Heart right ventricle (tissue), 16 donors: ENCODE measurements at regions of chr1 and their contacts with region 1.

Region 1: GRCh38 chr1:183023601-183024316 is 539 bp downstream of the LAMC1 start:
- DNase-seq: peak; percentile 57 to 63
- ATAC-seq: peak; percentile 26 to 70 (median 44)
- H3K4me3 ChIP-seq: peak overlapping the region; percentile 55 to 98 (median 83)
- H3K27ac ChIP-seq: peak overlapping the region; percentile 99 to 100 (median 100)
- H3K4me1 ChIP-seq: peaks cover 3 to 70% (median 59%) of the 10 kb centered on the region in 9 donors
- H3K27me3 ChIP-seq: peaks cover 0 to 19% (median 0%) of the 10 kb centered on the region in 7 donors
- CTCF ChIP-seq: peak in 8 of 9 donors; percentile 13 to 63 (median 45)

Region 2: GRCh38 chr1:182789138-182790076 is 234.4 kb before region 1 on chr1 and contains the start of gene NPL:
- intact Hi-C with region 1: no loop called
- DNase-seq: peak; percentile 82 to 86
- ATAC-seq: peak; percentile 96 to 98 (median 97)
- H3K4me3 ChIP-seq: peak within 1 kb of the TSS; percentile 10 to 76 (median 66)
- H3K27ac ChIP-seq: peak within 1 kb of the TSS in 8 of 10 donors; percentile 21 to 93 (median 65)
- H3K4me1 ChIP-seq: peaks cover 0 to 36% (median 7%) of the 10 kb centered on the region in 9 donors
- H3K27me3 ChIP-seq: no peaks in the 10 kb centered on the region
- CTCF ChIP-seq: no peak
- total RNA-seq, gene NPL: 1.8 to 26.5 (median 3.6) TPM

Region 3: GRCh38 chr1:182817802-182818201 is 206.0 kb before region 1 on chr1:
- intact Hi-C with region 1: no loop called
- DNase-seq: no peak
- ATAC-seq: no peak
- H3K4me3 ChIP-seq: no peak overlapping the region
- H3K27ac ChIP-seq: no peak overlapping the region
- H3K4me1 ChIP-seq: no peaks in the 10 kb centered on the region
- H3K27me3 ChIP-seq: no peaks in the 10 kb centered on the region
- CTCF ChIP-seq: no peak

Region 4: DNA sequence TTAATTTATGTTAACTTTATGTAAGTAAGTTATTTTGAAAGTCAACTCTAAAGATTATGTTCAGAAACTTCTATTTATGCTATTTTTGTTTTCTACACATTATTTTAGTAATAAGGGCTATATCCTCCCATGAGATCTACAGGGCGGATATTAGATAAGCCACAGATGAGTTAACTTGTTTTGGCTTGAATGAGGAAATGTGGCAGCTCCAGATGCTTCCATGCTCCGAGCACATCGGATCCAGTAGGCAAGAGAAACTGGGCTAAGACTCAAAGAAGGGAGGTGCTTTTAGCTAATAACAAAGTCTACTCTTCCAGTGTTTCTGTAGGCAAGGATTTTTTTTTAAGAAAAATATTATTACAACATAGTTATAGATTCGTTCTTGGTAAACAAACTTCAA is 20.6 kb before region 1 on chr1:
- intact Hi-C with region 1: loop called in 1 of 10 experiments (anchors 2 kb)
- DNase-seq: peak; percentile 23 to 26
- ATAC-seq: peak; percentile 68 to 94 (median 89)
- H3K4me3 ChIP-seq: peak overlapping the region in 1 of 10 donors; percentile 5
- H3K27ac ChIP-seq: peak overlapping the region; percentile 23 to 83 (median 52)
- H3K4me1 ChIP-seq: peaks cover 0 to 40% (median 17%) of the 10 kb centered on the region in 9 donors
- H3K27me3 ChIP-seq: no peaks in the 10 kb centered on the region
- CTCF ChIP-seq: no peak

Region 5: GRCh38 chr1:183090391-183091006 is 66.7 kb after region 1 on chr1:
- intact Hi-C with region 1: loop called in 5 of 10 experiments (anchors 5 to 10 kb)
- DNase-seq: peak; percentile 33 to 61
- ATAC-seq: peak in 7 of 8 donors; percentile 77 to 94 (median 87)
- H3K4me3 ChIP-seq: no peak overlapping the region
- H3K27ac ChIP-seq: peak overlapping the region in 9 of 10 donors; percentile 9 to 61 (median 44)
- H3K4me1 ChIP-seq: peaks cover 8 to 93% (median 66%) of the 10 kb centered on the region in 9 donors
- H3K27me3 ChIP-seq: no peaks in the 10 kb centered on the region
- CTCF ChIP-seq: no peak

Region 6: DNA sequence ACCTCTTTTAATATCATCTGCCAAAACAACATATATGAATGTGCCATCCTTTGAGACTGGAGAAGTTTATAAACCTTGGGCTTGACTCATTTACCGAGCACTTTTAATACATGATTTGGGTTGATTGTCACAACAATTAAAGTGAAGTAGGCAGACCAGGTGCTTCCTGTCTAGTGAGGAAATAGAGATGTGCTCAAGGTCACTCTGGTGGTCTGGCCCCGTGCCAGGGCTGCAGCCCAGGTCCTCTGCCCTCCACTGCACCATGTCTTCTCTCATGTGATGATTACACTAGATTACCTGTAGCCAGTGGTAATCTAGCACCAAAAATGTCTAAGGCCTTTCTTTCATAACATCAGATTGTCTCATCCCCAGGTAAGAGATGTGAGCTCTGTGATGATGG is 100.5 kb after region 1 on chr1:
- intact Hi-C with region 1: loop called in 1 of 10 experiments (anchors 10 kb)
- DNase-seq: no peak
- ATAC-seq: no peak
- H3K4me3 ChIP-seq: no peak overlapping the region
- H3K27ac ChIP-seq: peak overlapping the region in 2 of 10 donors; percentile 8 to 26
- H3K4me1 ChIP-seq: peaks cover 0 to 30% (median 16%) of the 10 kb centered on the region in 9 donors
- H3K27me3 ChIP-seq: no peaks in the 10 kb centered on the region
- CTCF ChIP-seq: no peak

Region 7: GRCh38 chr1:183227963-183228649 is 204.3 kb after region 1 on chr1:
- intact Hi-C with region 1: loop called in 5 of 10 experiments (anchors 5 to 10 kb)
- DNase-seq: peak; percentile 44 to 45
- ATAC-seq: peak in 6 of 8 donors; percentile 61 to 83 (median 73)
- H3K4me3 ChIP-seq: no peak overlapping the region
- H3K27ac ChIP-seq: no peak overlapping the region
- H3K4me1 ChIP-seq: peaks cover 0 to 10% (median 0%) of the 10 kb centered on the region in 9 donors
- H3K27me3 ChIP-seq: no peaks in the 10 kb centered on the region
- CTCF ChIP-seq: peak; percentile 46 to 86 (median 79)